Prostate gland (tissue), 2 donors: ENCODE measurements at regions of chr5 and their contacts with region 1.

Region 1: DNA sequence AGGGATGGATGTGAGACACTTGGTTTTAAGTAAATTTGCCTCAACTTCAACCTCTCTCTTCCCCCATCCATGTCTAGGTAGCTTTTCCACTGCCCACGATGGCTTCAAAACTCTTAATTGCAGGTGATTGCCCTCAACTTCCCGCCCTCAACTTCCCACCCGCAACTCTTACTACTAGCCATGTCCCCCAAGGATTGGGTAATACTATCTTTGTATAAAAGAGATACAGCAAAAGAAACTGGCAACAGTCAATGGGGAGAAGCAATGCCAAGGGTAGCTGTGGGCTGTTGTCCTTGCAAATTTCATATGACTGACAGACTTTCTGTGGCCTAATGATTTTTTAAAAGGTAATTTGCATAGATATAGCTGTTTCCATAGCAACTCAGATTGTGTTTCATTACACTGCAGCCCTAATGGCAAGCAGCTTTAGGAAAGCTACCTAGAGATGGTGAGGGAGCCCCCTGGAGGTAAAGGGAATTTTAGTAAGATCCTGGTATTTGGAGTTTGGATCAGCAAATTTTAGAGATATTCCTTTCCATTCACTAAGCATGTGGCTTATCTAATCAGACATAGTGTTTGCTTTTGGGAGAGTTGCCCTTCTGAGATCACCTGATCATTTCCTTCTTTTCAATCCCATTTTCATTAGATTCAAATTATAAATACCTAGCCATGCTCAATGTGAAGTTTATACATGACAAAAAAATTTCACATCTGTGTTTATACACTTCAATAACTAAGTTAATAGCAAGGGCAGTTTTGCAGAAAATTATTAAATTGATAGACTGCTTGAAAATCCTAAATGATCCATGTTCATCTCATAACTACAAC is 421.6 kb upstream of the DAP start:
- DNase-seq: no peak
- H3K4me3 ChIP-seq: no peak overlapping the region
- H3K27ac ChIP-seq: no peak overlapping the region
- H3K4me1 ChIP-seq: no peaks in the 10 kb centered on the region
- H3K27me3 ChIP-seq: no peaks in the 10 kb centered on the region
- CTCF ChIP-seq: peak in 1 of 4 experiments; percentile 23
- POLR2A ChIP-seq: no peak

Region 2: DNA sequence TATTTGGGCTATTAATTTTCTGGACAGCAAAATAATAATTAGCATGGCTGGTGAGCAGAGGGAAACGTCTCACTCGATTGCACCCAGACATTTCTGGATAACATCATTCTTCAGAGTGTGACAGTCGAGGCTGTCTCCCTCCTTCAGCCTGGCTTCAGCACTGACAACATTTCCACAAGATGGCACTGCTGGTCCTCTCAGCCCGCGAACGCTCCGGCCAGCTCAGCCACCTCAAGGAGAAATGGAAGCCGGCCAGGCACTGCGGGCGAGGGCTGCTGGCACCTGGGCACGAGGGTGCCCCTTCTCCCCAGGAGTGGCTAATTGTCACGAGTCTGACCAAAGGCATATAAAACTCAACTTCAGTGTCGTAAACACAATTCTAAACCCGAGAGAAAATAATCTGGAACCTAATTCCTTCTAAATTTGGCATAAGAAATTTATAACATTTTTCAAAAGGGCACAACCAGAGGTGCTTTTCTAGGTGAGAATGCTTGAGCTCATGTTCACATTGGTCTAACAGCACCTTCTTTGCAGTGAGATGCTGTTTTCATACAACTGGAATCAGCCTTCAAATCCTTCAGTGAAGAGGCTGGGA is 487.5 kb before region 1 on chr5:
- intact Hi-C with region 1: loop called (anchors 5 kb)
- DNase-seq: peak; percentile 75
- H3K4me3 ChIP-seq: no peak overlapping the region
- H3K27ac ChIP-seq: no peak overlapping the region
- H3K4me1 ChIP-seq: no peaks in the 10 kb centered on the region
- H3K27me3 ChIP-seq: no peaks in the 10 kb centered on the region
- CTCF ChIP-seq: peak in 3 of 4 experiments; percentile 78 to 85 (median 85)
- POLR2A ChIP-seq: no peak